Activated CD4-positive, alpha-beta memory T cell treated with anti-CD3 and anti-CD28 coated beads for 36 hours (primary cell): ENCODE measurements at regions of chr10 and their contacts with region 1.

Region 1: GRCh38 chr10:101858723-101859500 is 15.3 kb upstream of the KCNIP2 start:
- DNase-seq: no peak
- H3K4me3 Mint-ChIP-seq: no peak overlapping the region
- H3K27ac Mint-ChIP-seq: no peak overlapping the region
- H3K4me1 Mint-ChIP-seq: peaks cover 8% of the 10 kb centered on the region
- H3K27me3 Mint-ChIP-seq: no peaks in the 10 kb centered on the region

Region 2: DNA sequence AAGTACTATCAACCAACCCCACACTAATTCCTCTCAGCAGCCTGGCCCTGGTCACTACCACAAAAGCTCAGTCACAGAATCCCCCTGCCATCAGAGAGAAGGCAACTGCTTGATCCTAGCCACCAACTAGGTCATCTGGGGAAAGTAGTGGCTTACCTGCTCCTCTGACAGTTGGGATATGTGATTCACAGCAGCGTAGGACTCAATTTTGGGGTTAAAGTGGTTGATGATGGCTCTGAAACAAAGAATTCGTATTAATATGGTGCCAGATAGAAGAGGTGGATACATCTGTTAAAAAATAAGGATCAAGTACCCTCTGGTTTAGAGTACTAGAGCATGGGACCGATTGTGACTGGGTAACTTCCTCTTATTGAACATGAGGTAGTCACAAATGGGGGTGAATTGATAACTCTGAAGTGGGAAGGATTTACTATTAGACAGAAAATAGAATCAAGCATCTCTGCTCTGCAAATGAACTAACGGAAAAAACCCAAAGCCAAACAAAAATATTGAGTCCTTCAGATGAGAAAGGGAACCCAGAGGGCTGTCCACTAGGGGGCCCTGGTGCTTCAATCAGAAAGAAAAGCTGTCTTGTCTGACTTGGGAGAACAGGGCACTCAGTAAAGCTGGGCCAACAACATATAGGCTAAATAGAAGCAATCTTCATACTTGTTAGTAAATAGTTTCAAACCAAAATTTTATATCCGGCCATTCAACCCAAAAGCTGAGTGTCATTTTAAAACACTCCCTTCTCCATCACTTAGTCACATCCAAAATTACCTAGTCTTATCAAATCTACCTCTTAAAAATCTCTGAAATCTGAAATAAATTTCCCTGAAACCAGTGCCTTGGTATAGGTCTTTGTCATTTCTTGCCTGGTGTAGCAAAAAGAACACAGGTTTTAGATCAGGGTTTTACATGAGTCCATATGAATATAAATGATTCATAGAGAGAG is 30.6 kb after region 1 on chr10:
- CTCF ChIA-PET with region 1: interaction called, 12 read pairs
- POLR2A ChIA-PET with region 1: no interaction called
- intact Hi-C with region 1: no loop called
- DNase-seq: peak; percentile 83
- H3K4me3 Mint-ChIP-seq: no peak overlapping the region
- H3K27ac Mint-ChIP-seq: no peak overlapping the region
- H3K4me1 Mint-ChIP-seq: no peaks in the 10 kb centered on the region
- H3K27me3 Mint-ChIP-seq: no peaks in the 10 kb centered on the region